GM10248 (cell line): ENCODE measurements at regions of chr11 and their contacts with region 1.

Region 1: DNA sequence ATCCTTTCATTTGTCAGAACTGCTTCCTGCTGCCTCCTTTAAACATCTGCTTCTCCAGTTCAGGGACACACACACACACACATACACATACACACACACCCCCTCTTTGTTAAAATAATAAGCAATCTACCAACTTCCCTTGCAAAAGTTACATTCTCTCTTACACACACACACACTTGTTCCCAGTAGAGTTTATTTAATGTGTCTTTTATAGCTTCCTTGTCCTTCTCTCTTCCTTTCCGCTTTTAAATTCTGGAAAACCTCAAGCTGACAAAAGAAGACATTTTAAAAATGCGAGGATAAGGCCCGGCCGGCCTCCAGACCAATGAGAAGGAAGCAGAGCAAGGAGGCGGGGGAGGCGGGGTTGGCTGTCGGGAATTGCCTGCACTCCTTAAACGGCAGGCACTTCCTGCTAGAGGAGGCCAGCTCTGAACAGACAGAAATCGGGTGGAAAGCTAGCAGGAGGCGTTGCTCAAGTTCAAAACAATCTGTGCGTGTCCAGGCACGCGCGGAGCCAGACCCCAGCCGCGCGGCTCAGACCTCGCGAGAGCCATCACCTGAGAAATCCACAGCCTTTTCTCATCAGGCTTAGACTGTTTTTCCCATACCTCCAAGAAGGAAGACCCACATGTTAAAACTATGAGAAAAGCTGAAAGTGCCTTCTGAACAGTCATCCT is 99.9 kb downstream of the MAML2 start:
- DNase-seq: peak; percentile 85
- CTCF ChIP-seq: no peak

Region 2: GRCh38 chr11:96254087-96254486 is 11.0 kb after region 1 on chr11:
- CTCF ChIA-PET with region 1: interaction called, 17 read pairs
- POLR2A ChIA-PET with region 1: interaction called, 6 read pairs
- DNase-seq: peak; percentile 51
- CTCF ChIP-seq: no peak